GM18951 (cell line): ENCODE measurements at regions of chr2 and their contacts with region 1.

Region 1: GRCh38 chr2:110741491-110741980 is 9.2 kb downstream of the ACOXL start:
- POLR2A ChIP-seq: no peak

Region 2: GRCh38 chr2:110688594-110689091 is 52.9 kb before region 1 on chr2:
- in situ Hi-C with region 1: loop called (anchors 5 kb)
- POLR2A ChIP-seq: no peak

Region 3: GRCh38 chr2:111022633-111023032 is 281.1 kb after region 1 on chr2:
- in situ Hi-C with region 1: no loop called
- POLR2A ChIP-seq: no peak